Caco-2 (cell line): ENCODE measurements at regions of chr6 and their contacts with region 1.

Region 1: GRCh38 chr6:99151634-99152344 is 197.7 kb downstream of the FAXC start:
- DNase-seq: peak; percentile 56 to 69
- H3K4me3 ChIP-seq: no peak overlapping the region
- H3K4me3 Mint-ChIP-seq: no peak overlapping the region
- H3K27ac Mint-ChIP-seq: no peak overlapping the region
- H3K4me1 ChIP-seq: no peaks in the 10 kb centered on the region
- H3K4me1 Mint-ChIP-seq: peaks cover 6% of the 10 kb centered on the region
- H3K27me3 ChIP-seq: no peaks in the 10 kb centered on the region
- H3K27me3 Mint-ChIP-seq: peaks cover 7% of the 10 kb centered on the region
- CTCF ChIP-seq: peak; percentile 76 to 82

Region 2: DNA sequence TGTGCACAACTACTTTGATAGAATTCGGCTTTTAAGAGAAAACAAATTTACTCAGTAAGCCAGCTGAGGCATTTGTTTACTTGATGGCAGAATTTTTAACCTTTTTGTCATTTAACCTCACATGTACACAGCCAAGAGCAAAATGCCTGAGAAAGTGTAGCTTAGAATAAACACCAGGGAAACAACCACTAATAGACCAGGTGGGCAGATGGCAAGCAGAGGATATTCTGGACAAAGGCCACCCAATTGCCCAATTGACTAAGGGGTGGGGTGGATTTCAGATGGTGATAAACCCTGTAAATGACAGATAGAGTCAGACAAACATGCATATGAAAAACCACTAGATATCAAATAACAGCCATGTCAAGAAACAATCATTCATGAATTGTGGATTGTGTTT is 13.3 kb before region 1 on chr6:
- CTCF ChIA-PET with region 1: interaction called, 12 read pairs
- POLR2A ChIA-PET with region 1: no interaction called
- intact Hi-C with region 1: no loop called
- DNase-seq: no peak
- H3K4me3 ChIP-seq: no peak overlapping the region
- H3K4me3 Mint-ChIP-seq: no peak overlapping the region
- H3K27ac Mint-ChIP-seq: no peak overlapping the region
- H3K4me1 ChIP-seq: no peaks in the 10 kb centered on the region; the same call in 1 of the 2 replicates
- H3K4me1 Mint-ChIP-seq: no peaks in the 10 kb centered on the region
- H3K27me3 ChIP-seq: no peaks in the 10 kb centered on the region
- H3K27me3 Mint-ChIP-seq: no peaks in the 10 kb centered on the region
- CTCF ChIP-seq: no peak

Region 3: DNA sequence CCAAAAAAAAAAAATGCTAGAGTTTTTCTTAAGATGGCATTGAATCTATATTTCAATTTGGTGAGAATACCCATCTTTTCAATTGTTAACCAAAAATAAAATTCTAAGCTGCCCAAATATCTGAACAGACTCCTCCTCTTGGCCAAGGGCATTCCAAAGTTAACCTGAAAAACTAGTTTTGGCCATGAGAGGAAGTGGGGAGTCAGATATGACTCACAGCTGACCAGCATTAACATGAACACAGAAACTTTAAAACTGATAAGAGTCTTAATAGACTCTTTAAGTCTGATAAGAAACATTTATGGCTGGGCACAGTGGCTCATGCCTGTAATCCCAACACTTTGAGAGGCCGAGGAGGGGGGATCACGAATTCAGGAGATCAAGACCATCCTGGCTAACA is 26.4 kb after region 1 on chr6:
- CTCF ChIA-PET with region 1: no interaction called
- POLR2A ChIA-PET with region 1: no interaction called
- intact Hi-C with region 1: no loop called
- DNase-seq: peak; percentile 12 to 26
- H3K4me3 ChIP-seq: no peak overlapping the region
- H3K4me3 Mint-ChIP-seq: no peak overlapping the region
- H3K27ac Mint-ChIP-seq: no peak overlapping the region
- H3K4me1 ChIP-seq: peaks cover 16% of the 10 kb centered on the region; the same call in 1 of the 2 replicates
- H3K4me1 Mint-ChIP-seq: no peaks in the 10 kb centered on the region
- H3K27me3 ChIP-seq: no peaks in the 10 kb centered on the region
- H3K27me3 Mint-ChIP-seq: no peaks in the 10 kb centered on the region
- CTCF ChIP-seq: no peak

Region 4: DNA sequence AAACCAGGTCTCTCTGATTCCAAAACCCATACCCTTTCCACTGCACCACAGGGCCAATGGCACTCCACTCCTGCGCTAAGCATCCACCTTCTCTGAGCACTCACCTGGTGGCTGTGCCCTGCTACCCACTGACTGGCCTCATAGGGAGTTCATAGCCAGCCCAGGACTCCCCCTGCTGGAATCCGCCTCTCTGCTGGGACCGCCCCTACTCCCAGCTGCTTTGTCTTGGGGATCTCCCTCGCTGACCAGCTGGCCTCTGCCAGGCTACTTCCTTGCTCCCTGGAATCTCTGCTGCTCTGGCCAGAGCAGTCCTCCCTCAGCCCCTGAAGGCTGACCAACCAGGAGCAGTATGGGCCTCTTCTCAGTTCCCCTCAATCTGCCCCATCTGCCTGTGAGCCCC is 68.0 kb after region 1 on chr6:
- CTCF ChIA-PET with region 1: no interaction called
- POLR2A ChIA-PET with region 1: no interaction called
- intact Hi-C with region 1: loop called (anchors 1 kb)
- DNase-seq: peak; percentile 48 to 51
- H3K4me3 ChIP-seq: no peak overlapping the region
- H3K4me3 Mint-ChIP-seq: no peak overlapping the region
- H3K27ac Mint-ChIP-seq: no peak overlapping the region
- H3K4me1 ChIP-seq: no peaks in the 10 kb centered on the region
- H3K4me1 Mint-ChIP-seq: no peaks in the 10 kb centered on the region
- H3K27me3 ChIP-seq: no peaks in the 10 kb centered on the region
- H3K27me3 Mint-ChIP-seq: peaks cover 8% of the 10 kb centered on the region
- CTCF ChIP-seq: peak in 1 of 2 experiments; percentile 44

Region 5: DNA sequence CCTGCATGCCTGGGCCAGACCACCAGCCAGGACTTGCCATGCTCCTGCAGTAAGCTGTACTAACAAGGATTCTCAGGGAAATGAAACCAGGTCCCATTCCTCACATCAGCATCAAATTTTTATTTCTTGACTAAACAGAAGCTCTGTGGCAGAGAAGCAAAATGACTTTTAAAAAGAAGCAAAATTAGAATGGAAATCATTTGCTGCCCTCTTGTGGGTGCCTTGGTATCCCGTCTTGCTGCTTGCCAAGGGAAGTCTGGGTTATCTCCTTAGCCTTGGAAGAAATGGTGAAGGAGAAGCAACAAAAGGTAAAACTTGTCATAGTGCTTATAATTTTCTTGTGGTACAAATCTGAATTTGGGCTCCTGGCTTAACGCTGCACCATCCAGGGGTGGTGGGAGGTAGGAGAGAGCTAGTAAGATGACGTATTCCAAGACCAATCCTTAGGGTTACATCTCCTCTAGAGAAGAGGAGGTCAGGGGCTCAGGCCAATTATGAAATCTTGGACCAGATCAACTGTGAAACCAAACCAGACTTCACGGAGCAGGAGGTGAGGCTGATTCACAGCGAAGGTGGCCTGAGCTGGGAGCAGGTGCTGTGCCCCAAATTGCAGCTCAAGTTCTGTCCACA is 90.2 kb after region 1 on chr6:
- CTCF ChIA-PET with region 1: interaction called, 9 read pairs
- POLR2A ChIA-PET with region 1: no interaction called
- intact Hi-C with region 1: loop called (anchors 1 kb)
- DNase-seq: peak in 1 of 2 experiments; percentile 36
- H3K4me3 ChIP-seq: no peak overlapping the region
- H3K4me3 Mint-ChIP-seq: no peak overlapping the region
- H3K27ac Mint-ChIP-seq: no peak overlapping the region
- H3K4me1 ChIP-seq: no peaks in the 10 kb centered on the region
- H3K4me1 Mint-ChIP-seq: no peaks in the 10 kb centered on the region
- H3K27me3 ChIP-seq: no peaks in the 10 kb centered on the region
- H3K27me3 Mint-ChIP-seq: peaks cover 3% of the 10 kb centered on the region
- CTCF ChIP-seq: peak; percentile 62 to 66